Gastrocnemius medialis (tissue), 4 donors: ENCODE measurements at regions of chr20 and their contacts with region 1.

Region 1: GRCh38 chr20:815914-816606 is 17.5 kb upstream of the FAM110A start:
- DNase-seq: peak; percentile 27 to 34
- ATAC-seq: peak; percentile 30 to 56
- H3K4me3 ChIP-seq: no peak overlapping the region
- H3K27ac ChIP-seq: no peak overlapping the region
- H3K4me1 ChIP-seq: peaks cover 6% of the 10 kb centered on the region in 2 donors
- H3K27me3 ChIP-seq: no peaks in the 10 kb centered on the region
- CTCF ChIP-seq: peak; percentile 95 to 98 (median 97)
- POLR2A ChIP-seq: no peak

Region 2: DNA sequence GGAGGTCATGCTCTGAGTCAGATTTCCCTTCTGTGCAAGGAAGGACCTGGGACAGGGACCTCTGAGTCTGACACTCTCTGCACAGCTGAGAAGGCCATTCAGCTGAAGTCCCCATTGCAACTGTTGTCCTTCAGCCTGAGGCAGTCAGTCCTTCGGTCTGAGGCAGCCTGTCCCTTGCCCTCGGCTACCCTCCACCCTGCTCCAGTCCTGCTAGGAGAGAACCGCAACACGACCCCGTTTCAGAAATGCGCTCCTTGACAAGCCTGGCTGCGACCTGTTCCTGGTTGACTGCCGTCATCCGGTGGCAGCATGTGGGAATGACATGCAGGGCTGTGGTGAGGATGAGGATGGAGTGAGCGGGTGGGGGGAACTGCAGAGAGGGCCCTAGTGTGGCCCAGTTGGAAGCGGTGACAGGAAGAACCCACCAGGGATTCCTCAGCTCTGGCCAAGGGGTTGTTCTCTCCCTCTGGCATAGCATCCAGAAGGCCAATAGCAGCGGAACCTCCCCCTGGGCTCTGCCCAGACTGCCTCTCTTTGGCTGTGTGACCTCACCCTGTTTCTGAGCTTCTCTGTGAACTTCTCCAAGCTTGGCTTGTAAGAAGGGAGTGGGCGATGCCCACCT is 140.4 kb after region 1 on chr20:
- in situ Hi-C with region 1: loop called (anchors 5 kb)
- intact Hi-C with region 1: loop called (anchors 1 kb)
- DNase-seq: peak; percentile 21 to 47
- ATAC-seq: peak; percentile 84 to 85
- H3K4me3 ChIP-seq: no peak overlapping the region
- H3K27ac ChIP-seq: no peak overlapping the region
- H3K4me1 ChIP-seq: no peaks in the 10 kb centered on the region
- H3K27me3 ChIP-seq: peaks cover 0 to 22% (median 9%) of the 10 kb centered on the region in 3 donors
- CTCF ChIP-seq: peak; percentile 94 to 98 (median 97)
- POLR2A ChIP-seq: no peak